ENCODE measurements at regions of chr1 and their contacts with region 1.

Region 1: DNA sequence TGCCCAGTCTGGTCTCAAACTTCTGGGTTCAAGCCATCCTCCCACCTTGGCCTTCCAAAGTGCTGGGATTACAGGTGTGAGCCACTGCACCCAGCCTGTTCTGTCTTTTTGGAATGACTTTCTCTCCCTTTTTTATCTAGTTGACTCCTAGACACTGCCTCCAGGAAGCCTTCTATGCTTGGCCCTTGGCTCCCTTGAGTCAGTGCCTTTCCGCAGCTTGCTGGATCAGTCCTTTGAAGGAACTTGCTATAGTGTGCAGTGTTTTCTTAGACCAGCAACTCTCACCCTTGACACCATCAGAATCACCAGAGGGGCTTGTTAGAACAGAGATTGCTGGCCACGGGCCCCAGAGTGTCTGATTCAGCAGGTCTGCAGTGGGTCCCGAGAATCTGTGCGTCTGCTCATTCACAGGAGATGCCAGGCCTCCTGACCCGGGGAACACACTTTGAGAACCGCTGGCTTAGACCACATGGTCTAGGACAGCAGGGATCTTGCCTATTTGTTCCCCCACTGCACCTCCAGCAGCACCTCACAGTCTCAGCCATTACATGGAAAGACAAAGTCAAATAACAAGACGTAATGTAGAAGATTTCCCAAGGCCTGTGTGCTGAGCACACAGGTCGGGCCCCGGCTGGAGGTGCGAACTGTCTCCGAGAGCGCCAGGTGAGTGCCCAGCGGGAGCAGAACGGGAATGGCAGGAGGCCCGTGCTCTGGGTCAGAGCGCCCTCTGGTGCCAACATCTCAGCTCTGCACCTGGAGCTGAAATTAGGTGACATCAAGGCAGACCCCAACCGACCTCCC is 27.4 kb upstream of the CTPS1 start:
- DNase-seq: peak; percentile 82
- CTCF ChIP-seq: peak; percentile 90

Region 2: GRCh38 chr1:40593449-40594186 is 358.5 kb before region 1 on chr1:
- CTCF ChIA-PET with region 1: no interaction called
- POLR2A ChIA-PET with region 1: no interaction called
- DNase-seq: no peak
- CTCF ChIP-seq: no peak

Region 3: DNA sequence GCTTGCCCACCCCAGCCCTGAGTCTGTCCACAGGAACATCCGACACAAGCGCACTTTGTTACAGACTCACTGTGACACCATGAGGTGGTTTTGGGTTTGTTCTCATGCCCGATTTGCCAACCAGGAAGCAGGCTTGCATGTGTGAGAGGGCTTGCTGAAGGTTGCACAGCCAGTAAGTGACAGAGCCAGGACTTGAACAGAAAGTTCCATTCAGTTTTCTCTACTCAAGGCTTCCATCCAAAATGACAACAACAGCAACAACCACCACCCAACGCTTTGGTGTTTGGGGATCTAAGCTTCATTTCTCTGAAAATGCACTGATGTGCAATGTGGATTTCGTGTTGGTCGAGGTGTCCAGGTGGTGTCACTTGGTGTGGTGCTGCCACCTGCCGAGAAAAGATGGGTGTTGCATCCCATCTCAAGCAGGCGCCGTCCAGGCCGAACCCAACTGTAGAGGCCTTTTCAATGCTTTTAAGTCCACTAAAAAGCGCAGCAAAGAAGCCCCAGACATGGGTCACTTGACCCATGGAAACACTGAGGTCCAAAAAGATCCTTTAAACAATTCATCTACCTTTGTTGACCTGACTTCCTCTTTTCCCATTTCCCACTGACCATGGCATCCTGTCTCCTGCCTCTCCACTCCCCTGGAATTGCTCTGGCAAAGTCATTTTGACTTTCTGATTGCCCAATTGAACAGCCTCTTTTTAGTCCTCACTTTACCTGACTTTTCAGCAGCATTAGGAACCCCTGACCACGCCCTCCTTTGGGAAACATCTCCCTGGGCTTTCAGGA is 102.1 kb before region 1 on chr1:
- CTCF ChIA-PET with region 1: interaction called, 95 read pairs
- POLR2A ChIA-PET with region 1: no interaction called
- DNase-seq: peak; percentile 81
- CTCF ChIP-seq: peak; percentile 92

Region 4: DNA sequence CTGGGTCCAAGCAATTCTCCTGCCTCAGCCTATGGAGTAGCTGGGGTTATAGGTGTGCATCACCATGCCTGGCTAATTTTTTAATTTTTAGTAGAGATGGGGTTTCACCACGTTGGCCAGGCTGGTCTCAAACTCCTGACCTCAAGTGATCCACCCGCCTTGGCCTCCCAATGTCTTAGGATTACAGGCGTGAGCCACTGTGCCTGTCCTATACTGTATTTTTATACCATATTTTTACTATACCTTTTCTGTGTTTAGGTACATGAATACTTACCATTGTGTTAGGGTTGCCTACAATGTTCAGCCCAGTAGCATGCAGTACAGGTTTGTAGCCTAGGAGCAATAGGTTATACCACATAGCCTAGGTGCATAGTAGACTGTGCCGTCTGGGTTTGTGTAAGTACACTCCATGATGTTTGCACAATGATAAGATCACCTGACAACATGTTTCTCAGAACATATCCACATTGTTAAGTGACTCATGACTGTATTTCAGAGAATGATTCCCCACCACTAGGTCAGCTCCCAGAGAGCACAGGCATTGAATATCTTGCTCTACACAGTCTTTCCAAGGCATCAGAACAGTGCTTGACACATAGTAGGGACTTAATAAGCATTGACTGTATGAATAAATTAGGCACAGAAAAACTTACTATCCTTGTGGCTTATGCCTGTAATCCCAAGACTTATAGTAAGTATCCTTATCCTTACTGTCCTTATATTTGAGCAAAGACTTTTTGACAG is 83.9 kb before region 1 on chr1:
- CTCF ChIA-PET with region 1: interaction called, 26 read pairs
- POLR2A ChIA-PET with region 1: no interaction called
- DNase-seq: no peak
- CTCF ChIP-seq: no peak

Region 5: GRCh38 chr1:40932018-40932417 is 20.1 kb before region 1 on chr1:
- CTCF ChIA-PET with region 1: interaction called, 144 read pairs
- POLR2A ChIA-PET with region 1: no interaction called
- DNase-seq: no peak
- CTCF ChIP-seq: no peak

Region 6: GRCh38 chr1:40965529-40965928 is 13.4 kb after region 1 on chr1:
- CTCF ChIA-PET with region 1: interaction called, 38 read pairs
- POLR2A ChIA-PET with region 1: no interaction called
- DNase-seq: no peak
- CTCF ChIP-seq: no peak

Region 7: GRCh38 chr1:40984066-40984465 is 31.9 kb after region 1 on chr1:
- CTCF ChIA-PET with region 1: interaction called, 14 read pairs
- POLR2A ChIA-PET with region 1: no interaction called
- DNase-seq: no peak
- CTCF ChIP-seq: no peak

Measured in GM10248 (cell line).